ENCODE measurements at regions of chr18 and their contacts with region 1.

Region 1: GRCh38 chr18:63949068-63949737 is at the start of gene HMSD:
- DNase-seq: peak; percentile 52
- H3K4me3 Mint-ChIP-seq: peak within 1 kb of the TSS; percentile 77
- H3K27ac Mint-ChIP-seq: peak within 1 kb of the TSS; percentile 67
- H3K4me1 Mint-ChIP-seq: peaks cover 38% of the 10 kb centered on the region
- H3K27me3 Mint-ChIP-seq: peaks cover 2% of the 10 kb centered on the region
- total RNA-seq, gene HMSD: 9.1 and 14.9 TPM in 2 replicates

Region 2: DNA sequence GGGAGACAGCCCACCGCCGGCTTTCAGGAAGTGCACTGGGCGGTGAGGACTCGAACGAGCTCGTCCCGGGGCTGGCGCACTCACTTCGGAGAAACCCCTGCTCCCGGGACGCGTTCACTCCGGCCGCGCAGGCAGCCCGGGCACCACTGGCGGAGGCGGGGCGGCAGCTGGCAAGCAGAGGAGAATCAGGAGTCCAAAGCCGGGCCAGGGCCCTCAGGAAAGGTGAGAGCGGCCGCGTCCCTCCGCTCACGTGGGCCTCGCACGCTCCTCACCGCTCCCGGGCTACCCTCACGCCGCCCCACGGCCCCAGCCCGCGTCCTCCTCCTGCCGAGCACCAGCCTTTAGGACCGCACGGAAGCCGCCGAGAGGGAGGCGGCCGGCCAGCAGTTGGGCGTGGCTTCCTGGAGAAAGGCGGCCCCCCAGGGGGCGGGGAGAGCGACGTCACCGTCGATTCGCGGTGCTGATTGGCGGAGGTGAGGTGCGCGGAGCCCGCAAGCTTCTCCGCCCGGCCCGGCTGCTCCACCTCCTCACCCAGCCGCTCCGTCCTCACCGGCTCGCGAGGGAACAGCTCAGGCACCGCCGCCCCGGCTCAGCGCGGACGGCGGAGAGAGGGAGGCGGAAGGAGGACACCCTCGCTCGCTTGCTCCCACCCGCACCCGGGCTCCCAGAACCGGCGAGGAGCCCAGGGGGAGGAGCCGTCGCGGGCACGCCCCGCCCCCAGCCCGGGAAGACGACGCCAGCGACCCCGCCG is 1426.5 kb before region 1 on chr18 and contains the start of gene ZCCHC2:
- intact Hi-C with region 1: loop called (anchors 10 kb)
- DNase-seq: peak; percentile 99
- H3K4me3 Mint-ChIP-seq: peak within 1 kb of the TSS; percentile 95
- H3K27ac Mint-ChIP-seq: peak within 1 kb of the TSS; percentile 88
- H3K4me1 Mint-ChIP-seq: peaks cover 29% of the 10 kb centered on the region
- H3K27me3 Mint-ChIP-seq: no peaks in the 10 kb centered on the region
- total RNA-seq, gene ZCCHC2: 43.8 and 48.6 TPM in 2 replicates

Region 3: GRCh38 chr18:63832470-63832869 is 116.7 kb before region 1 on chr18:
- intact Hi-C with region 1: loop called (anchors 2 kb)
- DNase-seq: no peak
- H3K4me3 Mint-ChIP-seq: no peak overlapping the region
- H3K27ac Mint-ChIP-seq: no peak overlapping the region
- H3K4me1 Mint-ChIP-seq: peaks cover 24% of the 10 kb centered on the region
- H3K27me3 Mint-ChIP-seq: peaks cover 41% of the 10 kb centered on the region

Region 4: GRCh38 chr18:63882333-63883141 is 66.7 kb before region 1 on chr18:
- intact Hi-C with region 1: loop called (anchors 1 kb)
- DNase-seq: no peak
- H3K4me3 Mint-ChIP-seq: no peak overlapping the region
- H3K27ac Mint-ChIP-seq: no peak overlapping the region
- H3K4me1 Mint-ChIP-seq: peaks cover 13% of the 10 kb centered on the region
- H3K27me3 Mint-ChIP-seq: peaks cover 6% of the 10 kb centered on the region

Region 5: GRCh38 chr18:63969960-63970802 is 21.0 kb after region 1 on chr18 and contains the start of gene SERPINB8:
- intact Hi-C with region 1: loop called (anchors 1 kb)
- DNase-seq: peak; percentile 71
- H3K4me3 Mint-ChIP-seq: peak within 1 kb of the TSS; percentile 90
- H3K27ac Mint-ChIP-seq: peak within 1 kb of the TSS; percentile 91
- H3K4me1 Mint-ChIP-seq: peaks cover 31% of the 10 kb centered on the region
- H3K27me3 Mint-ChIP-seq: no peaks in the 10 kb centered on the region
- total RNA-seq, gene SERPINB8: 19.0 and 21.0 TPM in 2 replicates

Region 6: DNA sequence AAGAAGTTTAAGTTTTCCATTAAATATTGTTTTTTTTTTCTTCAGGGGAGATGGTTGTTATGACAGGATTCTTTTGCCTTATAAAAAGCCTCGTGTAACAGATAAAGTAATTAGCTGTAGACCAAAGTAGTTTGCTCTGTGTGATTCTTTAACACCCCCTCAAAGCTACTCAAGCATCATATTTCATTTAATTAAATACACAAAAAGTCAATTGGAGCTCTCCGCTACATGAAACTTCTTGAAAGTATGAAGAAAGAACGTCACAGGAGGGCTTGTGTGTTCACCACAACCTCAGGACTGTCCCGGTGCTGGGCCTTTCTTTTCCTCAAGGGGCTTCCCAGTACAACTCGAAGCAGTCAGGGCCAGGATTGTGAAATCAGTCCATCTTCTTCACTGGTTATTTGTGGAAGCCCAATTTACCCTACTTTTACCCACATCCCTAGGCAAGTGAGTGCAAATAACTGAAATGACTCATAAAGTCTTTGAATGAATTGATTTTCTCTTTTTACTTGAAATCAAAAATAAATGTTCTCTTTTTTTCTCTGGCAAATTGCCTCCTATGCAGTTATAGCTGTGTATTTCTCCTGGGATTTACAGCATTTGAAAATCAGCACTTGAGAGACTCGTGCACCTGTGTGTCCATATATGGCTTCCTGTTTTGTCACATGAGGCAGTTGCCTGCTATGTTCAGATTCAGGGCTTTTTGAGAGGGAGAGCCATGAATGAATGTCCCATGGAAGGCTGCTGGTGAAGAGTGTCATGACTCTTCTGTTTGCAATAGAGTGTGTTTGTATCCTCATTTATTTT is 151.1 kb after region 1 on chr18:
- intact Hi-C with region 1: no loop called
- DNase-seq: no peak
- H3K4me3 Mint-ChIP-seq: no peak overlapping the region
- H3K27ac Mint-ChIP-seq: no peak overlapping the region
- H3K4me1 Mint-ChIP-seq: no peaks in the 10 kb centered on the region
- H3K27me3 Mint-ChIP-seq: no peaks in the 10 kb centered on the region